WTC11 (cell line): ENCODE measurements at regions of chr17 and their contacts with region 1.

Region 1: DNA sequence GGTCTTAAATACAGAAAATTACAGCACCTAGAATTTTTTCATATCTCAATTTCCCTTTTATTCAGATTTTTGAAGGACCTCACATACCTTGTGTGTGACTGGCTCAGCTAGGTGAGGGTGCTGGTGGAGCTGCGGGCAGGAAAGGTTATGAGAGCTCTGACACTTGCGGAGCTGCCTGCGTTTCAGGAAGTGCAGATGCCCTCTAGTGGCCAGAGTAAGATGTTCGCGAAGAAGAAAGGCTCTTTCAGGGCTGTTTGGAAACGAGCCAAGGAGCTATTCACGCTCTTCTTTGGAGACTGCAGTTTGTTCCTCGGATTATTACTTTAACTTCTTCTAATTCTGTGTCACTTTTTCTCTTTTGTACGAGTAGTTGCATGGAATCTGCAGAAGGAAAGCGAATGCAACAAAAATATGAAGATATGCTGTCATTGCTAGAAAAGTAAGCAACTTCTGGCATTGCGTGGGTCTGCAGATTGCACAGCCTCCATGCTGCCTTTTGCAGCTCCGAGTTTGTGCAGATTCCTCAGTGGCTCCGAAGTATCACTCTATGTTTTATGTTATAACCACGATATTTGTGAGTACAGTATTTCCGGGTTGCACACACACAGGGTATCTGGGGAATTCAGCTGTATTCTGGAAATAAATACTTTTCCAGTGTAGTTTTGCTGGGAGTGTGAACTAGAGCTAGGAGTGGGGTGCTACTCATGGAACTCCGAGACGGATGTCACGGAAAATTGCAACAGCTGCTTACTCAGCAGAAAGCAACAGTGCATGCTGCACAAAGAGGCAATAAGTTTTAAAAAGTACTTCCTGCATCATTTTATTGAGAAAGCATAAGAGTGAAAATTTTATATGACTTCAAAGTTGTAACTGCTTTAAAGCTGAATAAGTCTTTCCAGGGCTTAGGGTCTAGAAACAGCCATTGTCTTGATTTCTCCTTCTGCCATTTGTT is 46.3 kb downstream of the DNAH9 start:
- DNase-seq: peak; percentile 56
- ATAC-seq: peak; percentile 76
- H3K4me3 Mint-ChIP-seq: no peak overlapping the region
- H3K27ac Mint-ChIP-seq: no peak overlapping the region
- H3K4me1 Mint-ChIP-seq: no peaks in the 10 kb centered on the region
- H3K27me3 Mint-ChIP-seq: peaks cover 5% of the 10 kb centered on the region
- CTCF ChIP-seq: peak; percentile 74

Region 2: GRCh38 chr17:10875979-10876555 is 768.5 kb before region 1 on chr17:
- CTCF ChIA-PET with region 1: interaction called, 17 read pairs
- POLR2A ChIA-PET with region 1: no interaction called
- DNase-seq: peak; percentile 79
- ATAC-seq: peak; percentile 82
- H3K4me3 Mint-ChIP-seq: no peak overlapping the region
- H3K27ac Mint-ChIP-seq: no peak overlapping the region
- H3K4me1 Mint-ChIP-seq: no peaks in the 10 kb centered on the region
- H3K27me3 Mint-ChIP-seq: no peaks in the 10 kb centered on the region; the same call in none of the 2 replicates
- CTCF ChIP-seq: peak; percentile 59

Region 3: DNA sequence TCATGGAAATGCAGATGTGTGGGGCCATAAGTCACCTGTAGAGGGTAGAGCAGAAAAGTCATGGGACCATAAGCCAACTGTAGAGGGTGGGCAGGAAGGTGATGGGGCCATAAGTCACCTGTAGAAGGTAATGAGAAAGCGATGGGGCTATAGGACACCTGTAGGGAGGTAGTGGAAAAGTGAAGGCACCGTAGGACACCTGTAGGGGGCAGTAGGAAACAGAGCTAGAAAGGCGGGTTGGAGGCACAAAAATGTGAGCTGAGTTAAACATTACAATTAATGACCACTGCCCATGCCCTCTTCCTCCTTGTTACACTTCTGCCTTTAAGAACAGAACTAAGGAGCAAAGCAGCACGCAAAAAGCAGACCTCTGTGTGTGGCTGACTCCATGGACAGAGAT is 253.4 kb before region 1 on chr17:
- CTCF ChIA-PET with region 1: interaction called, 19 read pairs
- POLR2A ChIA-PET with region 1: no interaction called
- DNase-seq: peak; percentile 18
- ATAC-seq: peak; percentile 24; the same call in 1 of the 2 replicates
- H3K4me3 Mint-ChIP-seq: no peak overlapping the region
- H3K27ac Mint-ChIP-seq: no peak overlapping the region
- H3K4me1 Mint-ChIP-seq: no peaks in the 10 kb centered on the region
- H3K27me3 Mint-ChIP-seq: no peaks in the 10 kb centered on the region; the same call in 1 of the 2 replicates
- CTCF ChIP-seq: no peak

Region 4: GRCh38 chr17:11430751-11431150 is 213.8 kb before region 1 on chr17:
- CTCF ChIA-PET with region 1: no interaction called
- POLR2A ChIA-PET with region 1: no interaction called
- DNase-seq: no peak
- ATAC-seq: no peak
- H3K4me3 Mint-ChIP-seq: no peak overlapping the region
- H3K27ac Mint-ChIP-seq: no peak overlapping the region
- H3K4me1 Mint-ChIP-seq: no peaks in the 10 kb centered on the region
- H3K27me3 Mint-ChIP-seq: peaks cover 5% of the 10 kb centered on the region
- CTCF ChIP-seq: no peak

Region 5: GRCh38 chr17:11535231-11535630 is 109.3 kb before region 1 on chr17:
- CTCF ChIA-PET with region 1: no interaction called
- POLR2A ChIA-PET with region 1: no interaction called
- DNase-seq: no peak
- ATAC-seq: no peak
- H3K4me3 Mint-ChIP-seq: no peak overlapping the region
- H3K27ac Mint-ChIP-seq: no peak overlapping the region
- H3K4me1 Mint-ChIP-seq: peaks cover 6% of the 10 kb centered on the region
- H3K27me3 Mint-ChIP-seq: peaks cover 3% of the 10 kb centered on the region; the same call in 1 of the 2 replicates
- CTCF ChIP-seq: no peak

Region 6: GRCh38 chr17:11628374-11628773 is 16.2 kb before region 1 on chr17:
- CTCF ChIA-PET with region 1: interaction called, 24 read pairs
- POLR2A ChIA-PET with region 1: no interaction called
- DNase-seq: peak; percentile 67
- ATAC-seq: peak; percentile 85
- H3K4me3 Mint-ChIP-seq: no peak overlapping the region
- H3K27ac Mint-ChIP-seq: no peak overlapping the region
- H3K4me1 Mint-ChIP-seq: no peaks in the 10 kb centered on the region; the same call in 1 of the 2 replicates
- H3K27me3 Mint-ChIP-seq: no peaks in the 10 kb centered on the region
- CTCF ChIP-seq: 0 out of 2 replicates have a peak, but pooled peaks have one; percentile 15

Region 7: DNA sequence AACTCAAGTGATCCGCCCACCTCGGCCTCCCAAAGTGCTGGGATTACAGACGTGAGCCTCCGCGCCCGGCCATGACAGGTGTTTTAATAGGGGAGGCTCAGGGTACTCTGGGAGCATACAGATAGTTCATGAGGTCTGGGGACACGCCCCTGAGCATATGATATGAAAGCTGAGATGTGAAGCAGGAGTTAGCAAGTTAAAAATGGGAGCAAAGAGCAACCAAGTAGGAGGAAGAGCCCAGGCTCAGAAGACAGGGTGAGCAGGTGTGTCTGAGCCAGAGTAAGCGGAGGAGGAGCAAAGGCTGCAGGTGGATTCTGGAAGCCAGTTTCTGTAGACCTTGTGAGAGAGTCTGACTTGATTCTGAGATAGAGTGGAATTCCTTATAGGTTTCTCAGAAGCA is 57.4 kb after region 1 on chr17:
- CTCF ChIA-PET with region 1: no interaction called
- POLR2A ChIA-PET with region 1: no interaction called
- DNase-seq: no peak
- ATAC-seq: no peak
- H3K4me3 Mint-ChIP-seq: no peak overlapping the region
- H3K27ac Mint-ChIP-seq: no peak overlapping the region
- H3K4me1 Mint-ChIP-seq: no peaks in the 10 kb centered on the region; the same call in 1 of the 2 replicates
- H3K27me3 Mint-ChIP-seq: peaks cover 2% of the 10 kb centered on the region; the same call in 1 of the 2 replicates
- CTCF ChIP-seq: no peak

Region 8: DNA sequence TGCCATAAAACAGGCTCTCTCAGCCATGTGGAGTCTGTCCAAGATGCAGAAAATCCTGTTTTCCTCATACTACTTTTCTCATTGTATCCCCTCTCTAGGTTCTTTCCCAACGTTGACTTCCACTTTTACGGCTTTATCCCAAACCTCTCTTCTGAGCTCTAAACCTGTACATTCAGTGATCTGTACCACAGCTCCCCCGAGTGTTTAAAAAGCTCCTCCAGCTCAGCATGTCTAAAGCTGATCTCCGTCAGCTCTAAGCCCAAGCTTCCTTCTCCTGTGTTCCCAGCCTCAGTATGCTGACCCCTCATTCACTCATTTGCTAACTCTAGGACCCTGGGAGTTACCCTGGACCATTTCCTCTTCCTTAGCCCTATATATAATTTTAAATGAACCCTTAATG is 98.3 kb after region 1 on chr17:
- CTCF ChIA-PET with region 1: interaction called, 21 read pairs
- POLR2A ChIA-PET with region 1: no interaction called
- DNase-seq: no peak
- ATAC-seq: peak; percentile 52
- H3K4me3 Mint-ChIP-seq: no peak overlapping the region
- H3K27ac Mint-ChIP-seq: no peak overlapping the region
- H3K4me1 Mint-ChIP-seq: peaks cover 3% of the 10 kb centered on the region; the same call in 1 of the 2 replicates
- H3K27me3 Mint-ChIP-seq: no peaks in the 10 kb centered on the region
- CTCF ChIP-seq: no peak

Region 9: DNA sequence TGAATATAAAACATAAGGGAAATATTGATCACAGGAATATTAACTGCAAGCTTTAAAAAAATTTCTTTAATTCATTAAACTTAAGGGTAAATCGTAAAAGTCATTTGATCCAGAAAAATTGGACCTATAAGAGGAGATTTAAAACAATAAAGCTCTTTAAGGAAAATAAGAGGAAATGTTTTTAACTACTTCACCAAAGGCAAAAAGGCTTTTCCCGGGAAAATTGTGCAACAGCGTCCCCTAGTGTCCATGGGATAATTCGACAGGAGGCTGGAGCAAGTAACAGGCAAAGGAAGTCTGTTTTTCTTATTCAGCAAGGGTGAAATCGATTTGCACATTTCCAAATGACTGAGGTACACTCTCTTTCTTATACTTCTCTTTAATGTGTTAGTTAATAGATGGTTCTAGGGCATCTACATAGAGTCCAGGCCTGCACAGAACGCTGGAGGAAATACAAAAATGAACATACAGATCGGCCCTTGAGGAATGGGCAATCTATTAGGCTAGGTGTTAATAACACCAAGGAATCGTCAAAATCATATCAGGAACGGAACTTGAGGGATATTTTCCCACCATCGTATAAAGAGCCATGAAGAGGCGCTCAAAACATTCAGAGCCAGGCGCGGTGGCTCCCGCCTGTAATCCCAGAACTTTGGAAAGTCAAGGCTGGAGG is 291.3 kb after region 1 on chr17:
- CTCF ChIA-PET with region 1: interaction called, 12 read pairs
- POLR2A ChIA-PET with region 1: no interaction called
- DNase-seq: peak; percentile 75
- ATAC-seq: 0 out of 2 replicates have a peak, but pooled peaks have one; percentile 24
- H3K4me3 Mint-ChIP-seq: no peak overlapping the region
- H3K27ac Mint-ChIP-seq: no peak overlapping the region
- H3K4me1 Mint-ChIP-seq: peaks cover 4% of the 10 kb centered on the region
- H3K27me3 Mint-ChIP-seq: no peaks in the 10 kb centered on the region
- CTCF ChIP-seq: peak; percentile 97